Breast epithelium (tissue), 4 donors: ENCODE measurements at regions of chr16 and their contacts with region 1.

Region 1: DNA sequence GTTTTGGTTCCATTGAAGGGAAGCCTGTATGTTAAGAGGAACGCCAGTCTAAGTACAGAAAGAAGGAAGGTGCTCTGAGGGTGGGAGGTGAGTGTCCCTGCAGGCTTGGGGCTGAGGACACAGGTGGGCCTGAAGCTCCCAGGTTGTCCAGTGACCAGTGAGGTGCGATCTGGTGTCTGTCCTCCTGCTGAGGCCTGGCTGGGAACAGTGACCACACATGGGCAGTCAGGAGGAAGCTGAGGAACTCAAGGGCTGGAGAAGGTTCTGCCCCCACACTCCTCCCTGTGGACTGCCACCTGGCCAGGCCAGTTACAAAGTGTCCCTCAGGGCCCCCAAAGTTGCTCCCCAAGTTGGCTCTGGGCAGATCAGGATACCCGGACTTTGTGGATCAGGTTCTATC is 102.1 kb downstream of the N4BP1 start:
- DNase-seq: no peak
- H3K4me3 ChIP-seq: no peak overlapping the region
- H3K27ac ChIP-seq: no peak overlapping the region
- H3K4me1 ChIP-seq: no peaks in the 10 kb centered on the region
- H3K27me3 ChIP-seq: no peaks in the 10 kb centered on the region
- CTCF ChIP-seq: no peak
- POLR2A ChIP-seq: no peak

Region 2: GRCh38 chr16:46836534-46837530 is 1671.1 kb before region 1 on chr16:
- intact Hi-C with region 1: loop called (anchors 5 kb)
- DNase-seq: no peak
- H3K4me3 ChIP-seq: no peak overlapping the region
- H3K27ac ChIP-seq: no peak overlapping the region
- H3K4me1 ChIP-seq: no peaks in the 10 kb centered on the region
- H3K27me3 ChIP-seq: no peaks in the 10 kb centered on the region
- CTCF ChIP-seq: no peak
- POLR2A ChIP-seq: no peak

Region 3: DNA sequence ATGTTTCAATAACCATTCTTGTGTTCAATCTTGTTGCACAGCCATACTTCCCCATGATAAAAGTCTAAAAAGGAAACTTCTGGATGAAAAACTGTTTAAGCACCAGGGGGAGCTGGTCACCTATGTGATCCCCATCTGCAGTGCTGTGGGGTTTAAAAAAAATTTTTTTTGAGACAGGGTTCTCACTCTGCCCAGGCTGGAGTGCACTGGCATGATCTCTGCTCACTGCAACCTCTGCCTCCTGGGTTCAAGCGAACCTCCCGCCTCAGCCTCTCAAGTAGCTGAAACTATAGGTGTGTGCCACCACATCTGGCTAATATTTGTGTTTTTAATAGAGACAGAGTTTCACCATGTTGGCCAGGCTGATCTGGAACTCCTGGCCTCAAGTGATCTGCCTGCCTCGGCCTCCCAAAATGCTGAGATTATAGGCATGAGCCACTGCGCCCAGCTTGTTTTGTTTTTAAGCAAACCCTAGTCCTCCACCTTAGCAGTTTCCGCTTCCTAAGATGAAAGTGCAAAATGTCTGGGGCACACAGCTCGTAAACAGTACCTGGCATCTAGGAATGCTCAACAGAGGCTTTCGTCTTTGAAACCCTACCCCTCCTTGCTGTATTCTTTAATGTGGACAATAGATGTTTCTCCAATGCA is 1559.9 kb before region 1 on chr16:
- intact Hi-C with region 1: loop called (anchors 5 kb)
- DNase-seq: no peak
- H3K4me3 ChIP-seq: no peak overlapping the region
- H3K27ac ChIP-seq: no peak overlapping the region
- H3K4me1 ChIP-seq: no peaks in the 10 kb centered on the region
- H3K27me3 ChIP-seq: no peaks in the 10 kb centered on the region
- CTCF ChIP-seq: peak in 2 of 3 donors; percentile 10 to 44
- POLR2A ChIP-seq: no peak